ENCODE measurements at regions of chr10 and their contacts with region 1.

Region 1: DNA sequence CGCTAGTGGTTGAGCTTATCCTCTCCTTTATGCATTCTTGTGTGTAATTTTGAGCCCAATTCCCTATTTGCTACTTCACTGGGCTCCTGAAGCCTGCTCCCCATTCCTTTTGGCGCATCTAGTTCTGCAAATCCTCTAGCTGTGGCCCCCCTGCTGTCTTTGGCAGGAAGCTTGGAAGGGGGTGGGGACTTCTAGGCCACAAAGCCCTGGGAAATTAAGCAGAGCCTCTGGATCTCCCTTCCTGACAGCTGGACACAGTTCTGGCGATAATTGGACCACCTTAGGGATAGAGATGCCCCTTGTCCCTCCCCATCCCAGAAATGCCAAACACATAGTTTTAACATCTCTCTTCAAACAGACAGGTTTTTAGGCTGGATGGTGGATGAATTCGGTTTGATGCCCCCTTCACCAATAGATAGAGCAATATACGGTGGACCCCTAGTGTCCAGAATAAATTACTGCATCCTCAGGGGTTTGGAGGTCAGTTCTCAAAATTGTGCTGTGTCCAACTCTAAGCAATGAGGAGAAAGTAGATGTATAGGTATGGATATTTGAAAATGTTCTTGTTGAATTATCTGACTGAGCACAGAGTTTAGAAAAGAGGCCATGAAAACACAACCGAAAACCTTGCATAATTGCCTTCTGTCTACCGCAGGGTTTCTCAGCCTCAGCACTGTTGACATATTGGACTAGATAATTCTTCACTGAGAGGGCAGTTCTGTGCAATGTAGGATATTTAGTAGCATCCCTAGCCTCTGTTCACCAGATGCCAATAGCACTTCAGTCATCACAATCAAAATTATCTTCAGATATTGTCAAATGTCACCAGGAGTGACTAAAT is 75.5 kb downstream of the PAPSS2 start:
- DNase-seq: no peak
- ATAC-seq: peak; percentile 88
- H3K4me3 Mint-ChIP-seq: no peak overlapping the region
- H3K27ac Mint-ChIP-seq: no peak overlapping the region
- H3K4me1 Mint-ChIP-seq: no peaks in the 10 kb centered on the region
- H3K27me3 Mint-ChIP-seq: peaks cover 13% of the 10 kb centered on the region
- CTCF ChIP-seq: peak; percentile 69

Region 2: GRCh38 chr10:87531908-87532622 is 203.1 kb before region 1 on chr10:
- CTCF ChIA-PET with region 1: interaction called, 4 read pairs
- POLR2A ChIA-PET with region 1: no interaction called
- intact Hi-C with region 1: loop called (anchors 2 kb)
- DNase-seq: no peak
- ATAC-seq: no peak
- H3K4me3 Mint-ChIP-seq: no peak overlapping the region
- H3K27ac Mint-ChIP-seq: no peak overlapping the region
- H3K4me1 Mint-ChIP-seq: peaks cover 8% of the 10 kb centered on the region
- H3K27me3 Mint-ChIP-seq: no peaks in the 10 kb centered on the region
- CTCF ChIP-seq: no peak

Region 3: GRCh38 chr10:87659571-87660483 is 75.4 kb before region 1 on chr10 and contains the start of gene PAPSS2:
- CTCF ChIA-PET with region 1: interaction called, 20 read pairs
- POLR2A ChIA-PET with region 1: no interaction called
- intact Hi-C with region 1: loop called (anchors 5 kb)
- DNase-seq: peak; percentile 25
- ATAC-seq: peak; percentile 47
- H3K4me3 Mint-ChIP-seq: peak within 1 kb of the TSS; percentile 64
- H3K27ac Mint-ChIP-seq: no peak within 1 kb of the TSS
- H3K4me1 Mint-ChIP-seq: peaks cover 6% of the 10 kb centered on the region
- H3K27me3 Mint-ChIP-seq: peaks cover 45% of the 10 kb centered on the region
- CTCF ChIP-seq: no peak
- total RNA-seq, gene PAPSS2: 0.14 to 0.20 TPM

Region 4: GRCh38 chr10:87721781-87722180 is 13.4 kb before region 1 on chr10:
- CTCF ChIA-PET with region 1: interaction called, 11 read pairs
- POLR2A ChIA-PET with region 1: no interaction called
- intact Hi-C with region 1: no loop called
- DNase-seq: no peak
- ATAC-seq: no peak
- H3K4me3 Mint-ChIP-seq: no peak overlapping the region
- H3K27ac Mint-ChIP-seq: no peak overlapping the region
- H3K4me1 Mint-ChIP-seq: no peaks in the 10 kb centered on the region
- H3K27me3 Mint-ChIP-seq: peaks cover 14% of the 10 kb centered on the region
- CTCF ChIP-seq: no peak

Region 5: DNA sequence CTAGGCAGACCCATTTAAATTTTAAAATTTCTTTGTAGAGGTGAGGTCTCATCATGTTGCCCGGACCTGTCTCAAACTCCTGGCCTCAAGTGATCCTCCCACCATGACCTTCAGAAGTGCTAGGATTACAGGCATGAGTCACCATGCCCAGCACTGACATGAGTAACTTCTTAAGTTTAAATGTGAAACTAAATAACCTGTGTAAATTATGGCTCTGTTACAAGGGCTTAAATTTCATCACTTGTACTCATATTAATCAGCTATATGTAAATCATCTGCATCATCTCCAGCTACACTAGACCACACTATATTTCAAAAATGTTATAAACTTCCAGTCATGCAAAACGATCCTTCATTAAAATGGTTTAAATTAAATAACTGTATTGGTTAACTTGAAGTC is 26.7 kb after region 1 on chr10:
- CTCF ChIA-PET with region 1: interaction called, 12 read pairs
- POLR2A ChIA-PET with region 1: no interaction called
- intact Hi-C with region 1: no loop called
- DNase-seq: peak; percentile 82
- ATAC-seq: peak; percentile 97
- H3K4me3 Mint-ChIP-seq: no peak overlapping the region
- H3K27ac Mint-ChIP-seq: peak overlapping the region; percentile 80
- H3K4me1 Mint-ChIP-seq: peaks cover 28% of the 10 kb centered on the region
- H3K27me3 Mint-ChIP-seq: no peaks in the 10 kb centered on the region
- CTCF ChIP-seq: no peak

Region 6: DNA sequence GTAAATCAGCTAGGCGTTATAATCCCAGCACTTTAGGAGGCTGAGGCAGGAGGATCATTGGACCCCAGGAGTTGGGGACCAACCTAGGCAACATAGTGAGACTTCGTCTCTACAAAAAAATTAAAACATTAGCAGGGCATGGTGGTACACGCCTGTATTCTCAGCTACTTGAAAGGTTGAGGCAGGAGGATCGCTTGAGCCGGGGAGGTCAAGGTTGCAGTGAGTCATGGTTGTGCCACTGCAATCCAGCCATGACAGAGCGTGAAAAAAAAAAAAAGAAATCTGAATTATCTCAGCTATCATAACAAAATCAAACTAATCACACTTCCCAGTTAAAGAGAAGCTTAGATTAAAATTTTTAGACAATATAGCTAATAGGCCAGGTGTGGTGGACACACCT is 47.5 kb after region 1 on chr10:
- CTCF ChIA-PET with region 1: no interaction called
- POLR2A ChIA-PET with region 1: no interaction called
- intact Hi-C with region 1: no loop called
- DNase-seq: no peak
- ATAC-seq: no peak
- H3K4me3 Mint-ChIP-seq: no peak overlapping the region
- H3K27ac Mint-ChIP-seq: no peak overlapping the region
- H3K4me1 Mint-ChIP-seq: peaks cover 4% of the 10 kb centered on the region
- H3K27me3 Mint-ChIP-seq: no peaks in the 10 kb centered on the region
- CTCF ChIP-seq: no peak

Region 7: GRCh38 chr10:87868277-87868676 is 133.1 kb after region 1 on chr10:
- CTCF ChIA-PET with region 1: no interaction called
- POLR2A ChIA-PET with region 1: no interaction called
- intact Hi-C with region 1: no loop called
- DNase-seq: no peak
- ATAC-seq: no peak
- H3K4me3 Mint-ChIP-seq: peak overlapping the region; percentile 54
- H3K27ac Mint-ChIP-seq: no peak overlapping the region
- H3K4me1 Mint-ChIP-seq: peaks cover 49% of the 10 kb centered on the region
- H3K27me3 Mint-ChIP-seq: no peaks in the 10 kb centered on the region
- CTCF ChIP-seq: no peak

Region 8: GRCh38 chr10:88082806-88083596 is 347.8 kb after region 1 on chr10:
- CTCF ChIA-PET with region 1: no interaction called
- POLR2A ChIA-PET with region 1: no interaction called
- intact Hi-C with region 1: no loop called
- DNase-seq: no peak
- ATAC-seq: no peak
- H3K4me3 Mint-ChIP-seq: no peak overlapping the region
- H3K27ac Mint-ChIP-seq: no peak overlapping the region
- H3K4me1 Mint-ChIP-seq: peaks cover 6% of the 10 kb centered on the region
- H3K27me3 Mint-ChIP-seq: peaks cover 6% of the 10 kb centered on the region
- CTCF ChIP-seq: no peak

Measured in activated CD8-positive, alpha-beta T cell treated with anti-CD3 and anti-CD28 coated beads for 36 hours (primary cell).